Dorsolateral prefrontal cortex (tissue), 120 donors: ENCODE measurements at regions of chr10 and their contacts with region 1.

Region 1: DNA sequence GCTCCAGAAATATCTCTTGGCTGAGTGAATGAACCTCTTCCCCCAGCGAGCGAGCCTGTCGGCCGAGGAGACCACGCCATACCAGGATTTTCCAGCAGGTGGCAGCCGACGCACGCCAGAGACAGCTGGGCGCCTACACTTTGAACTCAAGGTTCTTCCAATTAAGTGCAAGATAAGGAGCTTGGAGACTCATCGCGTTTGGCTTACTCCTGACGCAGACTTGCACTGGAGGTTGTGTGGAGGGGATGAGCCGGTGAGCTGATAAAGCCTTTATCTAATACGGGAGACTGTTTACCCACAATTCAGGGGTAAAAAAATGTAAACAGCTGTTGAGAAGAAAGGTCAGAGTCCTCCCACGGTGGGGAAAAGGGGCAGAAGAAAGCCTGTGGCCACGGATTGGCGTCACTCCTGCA is 45.9 kb upstream of the EMX2 start:
- DNase-seq: peak; percentile 52 to 85 (median 67)
- H3K4me3 ChIP-seq: no peak overlapping the region
- H3K27ac ChIP-seq: no peak overlapping the region
- H3K27me3 ChIP-seq: peaks cover 0 to 11% (median 0%) of the 10 kb centered on the region in 45 donors
- CTCF ChIP-seq: peak; percentile 73 to 99 (median 95)

Region 2: GRCh38 chr10:117537436-117537903 is 40.8 kb after region 1 on chr10:
- intact Hi-C with region 1: loop called in 1 of 2 experiments (anchors 1 kb)
- DNase-seq: no peak
- H3K4me3 ChIP-seq: peak overlapping the region in 49 of 59 donors; percentile 7 to 57 (median 31)
- H3K27ac ChIP-seq: peak overlapping the region in 17 of 59 donors; percentile 11 to 72 (median 47)
- H3K27me3 ChIP-seq: peaks cover 0 to 100% (median 95%) of the 10 kb centered on the region in 45 donors
- CTCF ChIP-seq: peak in 55 of 56 donors; percentile 31 to 88 (median 65)

Region 3: GRCh38 chr10:118241229-118242137 is 744.9 kb after region 1 on chr10:
- intact Hi-C with region 1: loop called (anchors 2 kb)
- DNase-seq: peak; percentile 66 to 93 (median 81)
- H3K4me3 ChIP-seq: peak overlapping the region in 50 of 59 donors; percentile 6 to 57 (median 36)
- H3K27ac ChIP-seq: peak overlapping the region in 2 of 59 donors; percentile 57 to 65
- H3K27me3 ChIP-seq: peaks cover 0 to 66% (median 38%) of the 10 kb centered on the region in 45 donors
- CTCF ChIP-seq: peak; percentile 88 to 100 (median 97)

Region 4: GRCh38 chr10:118459726-118460193 is 963.1 kb after region 1 on chr10:
- intact Hi-C with region 1: loop called in 1 of 2 experiments (anchors 10 kb)
- DNase-seq: peak in 9 of 10 donors; percentile 39 to 80 (median 66)
- H3K4me3 ChIP-seq: peak overlapping the region in 5 of 59 donors; percentile 4 to 31 (median 22)
- H3K27ac ChIP-seq: no peak overlapping the region
- H3K27me3 ChIP-seq: peaks cover 0 to 42% (median 7%) of the 10 kb centered on the region in 45 donors
- CTCF ChIP-seq: peak; percentile 43 to 86 (median 76)

Region 5: GRCh38 chr10:118568327-118568848 is 1071.8 kb after region 1 on chr10:
- intact Hi-C with region 1: loop called in 1 of 2 experiments (anchors 10 kb)
- DNase-seq: no peak
- H3K4me3 ChIP-seq: peak overlapping the region in 6 of 59 donors; percentile 18 to 39 (median 26)
- H3K27ac ChIP-seq: peak overlapping the region in 3 of 59 donors; percentile 17 to 74 (median 47)
- H3K27me3 ChIP-seq: peaks cover 0 to 3% (median 0%) of the 10 kb centered on the region in 45 donors
- CTCF ChIP-seq: peak; percentile 69 to 94 (median 84)